ENCODE measurements at regions of chr6 and their contacts with region 1.

Region 1: DNA sequence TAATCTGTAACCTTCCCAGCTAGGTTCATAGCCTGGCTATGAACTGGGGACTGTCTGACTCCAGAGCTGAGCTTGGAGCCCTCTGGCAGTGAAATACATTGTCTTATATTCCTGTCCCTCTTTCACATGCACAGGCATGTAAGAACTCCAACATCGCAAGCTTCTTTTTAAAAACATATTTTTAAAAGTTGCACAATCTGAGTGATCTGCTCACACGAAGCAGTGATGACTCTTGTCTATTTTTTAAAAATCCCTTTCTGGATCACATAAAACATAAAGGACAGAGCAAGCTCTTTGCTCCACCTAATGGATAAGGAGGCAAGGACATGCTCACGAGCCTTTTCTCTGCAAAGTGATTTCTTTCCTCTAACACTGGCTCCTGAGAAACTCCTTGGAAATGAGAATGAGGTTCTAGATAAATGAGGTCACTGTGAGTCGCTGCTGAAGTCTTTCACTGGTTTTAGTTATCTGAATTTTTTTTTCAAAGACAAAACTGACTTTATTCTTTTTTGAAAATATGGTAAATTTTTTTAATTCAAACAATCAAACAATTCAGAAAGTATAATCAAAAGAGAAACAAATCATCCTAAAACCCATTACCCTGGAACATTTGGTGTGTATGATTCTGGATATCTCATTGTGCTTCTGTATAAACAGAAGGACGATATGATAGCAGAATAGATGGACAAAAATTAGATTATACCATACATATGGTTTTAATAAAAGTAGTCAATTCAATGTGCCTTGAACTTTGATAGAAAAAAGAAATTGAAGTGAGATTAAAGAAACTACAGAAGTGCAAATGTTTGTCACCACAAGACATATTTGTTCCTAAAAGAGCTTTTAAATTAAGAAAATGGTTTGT is 30.8 kb downstream of the IL20RA start:
- DNase-seq: no peak
- H3K4me3 Mint-ChIP-seq: no peak overlapping the region
- H3K27ac Mint-ChIP-seq: no peak overlapping the region
- H3K4me1 Mint-ChIP-seq: no peaks in the 10 kb centered on the region
- H3K27me3 Mint-ChIP-seq: no peaks in the 10 kb centered on the region
- CTCF ChIP-seq: no peak

Region 2: GRCh38 chr6:136846046-136846445 is 167.9 kb before region 1 on chr6:
- CTCF ChIA-PET with region 1: no interaction called
- intact Hi-C with region 1: loop called (anchors 2 kb)
- DNase-seq: peak; percentile 21
- H3K4me3 Mint-ChIP-seq: no peak overlapping the region
- H3K27ac Mint-ChIP-seq: no peak overlapping the region
- H3K4me1 Mint-ChIP-seq: no peaks in the 10 kb centered on the region
- H3K27me3 Mint-ChIP-seq: no peaks in the 10 kb centered on the region
- CTCF ChIP-seq: no peak

Region 3: GRCh38 chr6:136967876-136968752 is 45.9 kb before region 1 on chr6:
- CTCF ChIA-PET with region 1: interaction called, 4 read pairs
- intact Hi-C with region 1: loop called (anchors 2 kb)
- DNase-seq: peak; percentile 74
- H3K4me3 Mint-ChIP-seq: no peak overlapping the region
- H3K27ac Mint-ChIP-seq: no peak overlapping the region
- H3K4me1 Mint-ChIP-seq: peaks cover 9% of the 10 kb centered on the region
- H3K27me3 Mint-ChIP-seq: no peaks in the 10 kb centered on the region
- CTCF ChIP-seq: no peak

Measured in Calu3 (cell line).